ENCODE measurements at regions of chr6 and their contacts with region 1.

Region 1: DNA sequence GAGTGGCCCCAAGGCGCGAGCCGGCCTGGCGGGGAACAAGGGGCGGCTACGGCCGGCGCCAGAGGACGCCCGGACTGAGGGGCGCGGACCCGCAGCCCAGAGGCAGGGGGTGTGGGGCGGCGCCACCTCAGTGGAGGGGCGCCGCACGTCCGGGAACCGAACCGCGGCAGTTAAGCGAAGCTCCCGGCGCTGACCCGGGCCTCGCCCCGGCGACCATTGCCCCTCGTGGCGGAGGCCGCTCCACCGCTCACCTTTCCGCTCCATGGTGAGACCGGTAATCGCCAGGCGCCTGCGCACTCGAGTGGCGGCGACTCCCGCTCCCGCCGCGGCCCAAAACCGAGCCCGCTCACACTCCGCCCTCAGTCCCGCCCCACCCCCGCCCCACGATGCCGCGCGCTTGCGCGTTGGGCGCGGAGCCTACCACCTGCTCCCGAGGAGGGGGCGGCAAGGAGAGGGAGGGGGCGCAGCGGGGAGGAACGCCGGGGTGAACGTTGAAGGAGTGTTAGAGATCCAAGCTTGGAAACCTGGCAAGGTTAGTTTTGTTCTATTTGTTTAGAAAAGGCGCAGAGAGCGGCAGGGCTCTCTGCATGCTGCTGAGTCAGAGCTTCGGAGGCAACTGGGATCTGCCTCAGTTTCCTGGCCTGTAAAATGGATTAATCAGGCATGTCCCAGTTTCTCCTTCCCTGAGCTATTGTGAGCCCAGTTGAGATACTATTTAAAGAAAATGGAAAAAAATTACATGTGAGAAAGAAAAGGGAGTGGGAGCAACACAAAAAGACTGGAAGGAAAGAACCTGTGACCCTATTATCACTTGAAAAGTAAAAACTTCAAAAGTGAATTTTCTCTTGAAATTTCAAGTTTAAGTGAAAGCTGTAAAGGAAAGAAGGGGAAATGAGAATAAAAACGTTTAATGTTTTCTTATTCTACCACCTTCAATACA is at the start of gene SRPK1:
- DNase-seq: peak; percentile 77 to 92
- H3K4me3 ChIP-seq: peak within 1 kb of the TSS; percentile 83 to 97 (median 86)
- H3K27ac ChIP-seq: peak within 1 kb of the TSS; percentile 68; the same call in 1 of the 2 replicates
- H3K4me1 ChIP-seq: peaks cover 0 to 8% (median 0%) of the 10 kb centered on the region in 4 experiments; a peak in 1 of 7 replicates
- H3K27me3 ChIP-seq: 0 out of 7 replicates have a peak, but pooled peaks cover 0 to 4% (median 0%) of the 10 kb centered on the region in 4 experiments
- CTCF ChIP-seq: no peak
- EP300 ChIP-seq: no peak; a peak in 1 of 3 replicates
- POLR2A ChIP-seq: peak; percentile 80 to 92
- RAD21 ChIP-seq: no peak
- total RNA-seq, gene SRPK1: 102 and 116 TPM in 2 replicates

Region 2: GRCh38 chr6:35844290-35844689 is 76.8 kb before region 1 on chr6:
- CTCF ChIA-PET with region 1: no interaction called
- POLR2A ChIA-PET with region 1: no interaction called
- DNase-seq: no peak
- H3K4me3 ChIP-seq: no peak overlapping the region
- H3K27ac ChIP-seq: no peak overlapping the region
- H3K4me1 ChIP-seq: peaks cover 0 to 3% (median 0%) of the 10 kb centered on the region in 4 experiments; a peak in 1 of 7 replicates
- H3K27me3 ChIP-seq: no peaks in the 10 kb centered on the region
- CTCF ChIP-seq: no peak
- EP300 ChIP-seq: no peak
- POLR2A ChIP-seq: no peak
- RAD21 ChIP-seq: no peak

Region 3: DNA sequence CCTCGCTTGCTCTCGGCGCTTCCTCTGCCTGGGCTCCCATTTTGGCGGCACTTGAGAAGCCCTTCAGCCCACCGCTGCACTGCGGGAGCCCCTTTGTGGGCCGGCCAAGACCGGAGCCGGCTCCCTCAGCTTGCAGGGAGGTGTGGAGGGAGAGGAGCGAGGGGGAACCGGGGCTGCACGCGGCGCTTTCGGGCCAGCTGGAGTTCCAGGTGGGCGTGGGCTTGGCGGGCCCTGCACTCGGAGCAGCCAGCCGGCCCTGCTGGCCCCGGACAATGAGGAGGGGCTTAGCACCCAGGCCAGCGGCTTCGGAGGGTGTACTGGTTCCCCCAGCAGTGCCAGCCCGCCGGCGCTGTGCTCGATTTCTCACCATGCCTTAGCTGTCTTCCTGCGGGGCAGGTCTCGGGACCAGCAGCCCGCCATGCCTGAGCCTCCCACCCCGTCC is 10.1 kb after region 1 on chr6:
- CTCF ChIA-PET with region 1: interaction called, 3 read pairs
- POLR2A ChIA-PET with region 1: interaction called, 27 read pairs
- DNase-seq: peak in 1 of 2 experiments; percentile 76
- H3K4me3 ChIP-seq: peak overlapping the region; percentile 21 to 55 (median 26)
- H3K27ac ChIP-seq: no peak overlapping the region
- H3K4me1 ChIP-seq: peaks cover 0 to 6% (median 1%) of the 10 kb centered on the region in 4 experiments; a peak in 5 of 7 replicates
- H3K27me3 ChIP-seq: peaks cover 0 to 3% (median 0%) of the 10 kb centered on the region in 4 experiments; a peak in 2 of 7 replicates
- CTCF ChIP-seq: no peak
- EP300 ChIP-seq: no peak
- POLR2A ChIP-seq: 0 out of 3 replicates have a peak, but pooled peaks of 1 of the 2 experiments have one; percentile 16
- RAD21 ChIP-seq: no peak